IMR-90 (cell line): ENCODE measurements at regions of chr14 and their contacts with region 1.

Region 1: GRCh38 chr14:100900837-100901390 is 2.6 kb downstream of the RTL1 start:
- DNase-seq: no peak
- ATAC-seq: no peak
- H3K4me3 ChIP-seq: no peak overlapping the region
- H3K27ac ChIP-seq: no peak overlapping the region
- H3K4me1 ChIP-seq: no peaks in the 10 kb centered on the region; the same call in 1 of the 2 replicates
- H3K27me3 ChIP-seq: peaks cover 15% of the 10 kb centered on the region; the same call in 1 of the 2 replicates
- CTCF ChIP-seq: peak; percentile 34
- POLR2A ChIP-seq: no peak
- RAD21 ChIP-seq: peak; percentile 53

Region 2: GRCh38 chr14:100605706-100606686 is 294.9 kb before region 1 on chr14:
- CTCF ChIA-PET with region 1: no interaction called
- POLR2A ChIA-PET with region 1: no interaction called
- dilution Hi-C with region 1: no loop called
- in situ Hi-C with region 1: no loop called
- intact Hi-C with region 1: no loop called
- DNase-seq: peak; percentile 18
- ATAC-seq: no peak
- H3K4me3 ChIP-seq: no peak overlapping the region
- H3K27ac ChIP-seq: no peak overlapping the region
- H3K4me1 ChIP-seq: no peaks in the 10 kb centered on the region
- H3K27me3 ChIP-seq: peaks cover 27% of the 10 kb centered on the region
- CTCF ChIP-seq: no peak
- POLR2A ChIP-seq: no peak
- RAD21 ChIP-seq: no peak

Region 3: GRCh38 chr14:100709289-100710284 is 191.3 kb before region 1 on chr14:
- CTCF ChIA-PET with region 1: no interaction called
- POLR2A ChIA-PET with region 1: no interaction called
- dilution Hi-C with region 1: no loop called
- in situ Hi-C with region 1: no loop called
- intact Hi-C with region 1: loop called (anchors 2 kb)
- DNase-seq: peak; percentile 10
- ATAC-seq: peak; percentile 93
- H3K4me3 ChIP-seq: no peak overlapping the region
- H3K27ac ChIP-seq: no peak overlapping the region
- H3K4me1 ChIP-seq: no peaks in the 10 kb centered on the region; the same call in 1 of the 2 replicates
- H3K27me3 ChIP-seq: peaks cover 47% of the 10 kb centered on the region
- CTCF ChIP-seq: peak; percentile 56
- POLR2A ChIP-seq: no peak
- RAD21 ChIP-seq: peak; percentile 59

Region 4: GRCh38 chr14:101101456-101102056 is 200.6 kb after region 1 on chr14:
- CTCF ChIA-PET with region 1: no interaction called
- POLR2A ChIA-PET with region 1: no interaction called
- dilution Hi-C with region 1: no loop called
- in situ Hi-C with region 1: no loop called
- intact Hi-C with region 1: no loop called
- DNase-seq: no peak
- ATAC-seq: no peak
- H3K4me3 ChIP-seq: no peak overlapping the region
- H3K27ac ChIP-seq: no peak overlapping the region
- H3K4me1 ChIP-seq: no peaks in the 10 kb centered on the region
- H3K27me3 ChIP-seq: peaks cover 6% of the 10 kb centered on the region; the same call in 1 of the 2 replicates
- CTCF ChIP-seq: no peak
- POLR2A ChIP-seq: no peak
- RAD21 ChIP-seq: no peak

Region 5: GRCh38 chr14:101241807-101242278 is 340.9 kb after region 1 on chr14:
- CTCF ChIA-PET with region 1: no interaction called
- POLR2A ChIA-PET with region 1: no interaction called
- dilution Hi-C with region 1: no loop called
- in situ Hi-C with region 1: no loop called
- intact Hi-C with region 1: no loop called
- DNase-seq: no peak
- ATAC-seq: no peak
- H3K4me3 ChIP-seq: no peak overlapping the region
- H3K27ac ChIP-seq: no peak overlapping the region
- H3K4me1 ChIP-seq: no peaks in the 10 kb centered on the region
- H3K27me3 ChIP-seq: peaks cover 28% of the 10 kb centered on the region
- CTCF ChIP-seq: no peak
- POLR2A ChIP-seq: no peak
- RAD21 ChIP-seq: no peak